Caco-2 (cell line): ENCODE measurements at regions of chrX and their contacts with region 1.

Region 1: GRCh38 chrX:2374086-2374485 is 126.7 kb downstream of the DHRSX start:
- DNase-seq: no peak
- H3K4me3 ChIP-seq: no peak overlapping the region
- H3K4me3 Mint-ChIP-seq: no peak overlapping the region
- H3K27ac Mint-ChIP-seq: no peak overlapping the region
- H3K4me1 ChIP-seq: no peaks in the 10 kb centered on the region
- H3K4me1 Mint-ChIP-seq: no peaks in the 10 kb centered on the region
- H3K27me3 ChIP-seq: no peaks in the 10 kb centered on the region
- H3K27me3 Mint-ChIP-seq: no peaks in the 10 kb centered on the region
- CTCF ChIP-seq: no peak

Region 2: DNA sequence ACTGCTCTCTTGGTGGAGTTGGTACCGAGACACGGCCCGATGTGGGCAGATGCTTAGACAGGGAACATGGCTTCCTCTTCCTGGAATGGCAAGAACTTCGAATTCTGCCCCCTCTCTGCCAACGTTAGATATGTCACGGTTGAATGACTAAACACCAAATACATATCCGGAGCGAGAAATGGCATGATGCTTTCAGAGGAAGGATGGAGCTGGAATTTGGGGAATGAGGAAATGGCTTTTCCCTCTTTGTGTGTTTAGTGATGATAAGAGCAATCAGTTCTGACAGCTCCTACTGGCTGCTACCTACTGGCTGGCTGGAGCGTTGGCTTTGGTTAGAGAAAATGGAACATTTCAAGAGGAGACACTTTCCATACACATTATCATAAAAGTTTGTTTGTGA is 13.4 kb before region 1 on chrX:
- CTCF ChIA-PET with region 1: no interaction called
- POLR2A ChIA-PET with region 1: no interaction called
- intact Hi-C with region 1: loop called (anchors 1 kb)
- DNase-seq: peak; percentile 44 to 53
- H3K4me3 ChIP-seq: no peak overlapping the region
- H3K4me3 Mint-ChIP-seq: no peak overlapping the region
- H3K27ac Mint-ChIP-seq: no peak overlapping the region
- H3K4me1 ChIP-seq: peaks cover 13% of the 10 kb centered on the region
- H3K4me1 Mint-ChIP-seq: no peaks in the 10 kb centered on the region
- H3K27me3 ChIP-seq: no peaks in the 10 kb centered on the region
- H3K27me3 Mint-ChIP-seq: no peaks in the 10 kb centered on the region
- CTCF ChIP-seq: no peak